Heart right ventricle (tissue), 16 donors: ENCODE measurements at regions of chr22 and their contacts with region 1.

Region 1: GRCh38 chr22:31206906-31207678 is 5.0 kb upstream of the LIMK2 start:
- DNase-seq: peak; percentile 21 to 65
- ATAC-seq: peak in 5 of 8 donors; percentile 1 to 33 (median 3)
- H3K4me3 ChIP-seq: no peak overlapping the region
- H3K27ac ChIP-seq: peak overlapping the region in 7 of 10 donors; percentile 2 to 64 (median 22)
- H3K4me1 ChIP-seq: peaks cover 2 to 38% (median 25%) of the 10 kb centered on the region in 9 donors
- H3K27me3 ChIP-seq: no peaks in the 10 kb centered on the region
- CTCF ChIP-seq: no peak

Region 2: DNA sequence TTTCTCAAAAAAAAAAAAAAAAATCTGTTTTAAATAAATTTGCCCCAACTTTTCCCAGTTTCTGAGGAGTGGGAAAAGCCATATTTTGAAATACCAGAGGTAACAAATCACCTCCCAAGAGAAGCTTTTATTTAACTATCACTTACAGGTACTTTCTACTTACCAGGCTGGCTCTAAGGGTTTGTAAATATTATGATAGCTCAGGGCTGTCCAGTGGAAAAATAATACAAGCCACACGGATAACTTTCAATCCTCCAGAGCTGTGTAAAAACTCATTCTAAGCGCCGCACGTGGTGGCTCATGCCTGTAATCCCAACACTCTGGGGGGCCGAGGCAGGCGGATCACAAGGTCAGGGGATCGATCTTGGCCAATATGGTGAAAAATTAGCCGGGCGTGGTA is 696.0 kb before region 1 on chr22:
- intact Hi-C with region 1: no loop called
- DNase-seq: no peak
- ATAC-seq: no peak
- H3K4me3 ChIP-seq: no peak overlapping the region
- H3K27ac ChIP-seq: no peak overlapping the region
- H3K4me1 ChIP-seq: no peaks in the 10 kb centered on the region
- H3K27me3 ChIP-seq: peaks cover 0 to 33% (median 29%) of the 10 kb centered on the region in 7 donors
- CTCF ChIP-seq: no peak

Region 3: DNA sequence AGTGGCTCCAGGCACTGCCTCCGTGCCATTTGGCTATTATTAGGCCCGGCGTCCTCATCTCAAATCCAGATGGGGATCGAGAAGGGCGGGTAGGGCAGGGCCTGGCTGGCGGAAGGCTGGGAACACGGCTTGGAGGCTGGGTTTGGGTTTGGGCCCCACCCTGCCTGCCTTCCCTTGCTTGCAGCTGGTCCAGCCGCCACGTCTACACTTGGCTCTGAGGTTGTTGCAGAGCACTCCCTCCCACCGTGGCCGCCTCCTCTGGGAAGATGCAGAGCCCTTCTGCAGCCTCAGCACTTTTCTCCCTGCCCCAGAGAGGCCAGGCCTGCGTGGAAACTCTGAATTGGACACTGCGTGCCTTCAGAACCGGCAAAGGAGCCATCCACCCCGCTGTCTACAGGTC is 131.1 kb before region 1 on chr22:
- intact Hi-C with region 1: no loop called
- DNase-seq: peak; percentile 91 to 93
- ATAC-seq: peak; percentile 83 to 94 (median 92)
- H3K4me3 ChIP-seq: peak overlapping the region in 1 of 10 donors; percentile 14
- H3K27ac ChIP-seq: peak overlapping the region; percentile 24 to 92 (median 81)
- H3K4me1 ChIP-seq: peaks cover 10 to 44% (median 18%) of the 10 kb centered on the region in 9 donors
- H3K27me3 ChIP-seq: no peaks in the 10 kb centered on the region
- CTCF ChIP-seq: no peak

Region 4: DNA sequence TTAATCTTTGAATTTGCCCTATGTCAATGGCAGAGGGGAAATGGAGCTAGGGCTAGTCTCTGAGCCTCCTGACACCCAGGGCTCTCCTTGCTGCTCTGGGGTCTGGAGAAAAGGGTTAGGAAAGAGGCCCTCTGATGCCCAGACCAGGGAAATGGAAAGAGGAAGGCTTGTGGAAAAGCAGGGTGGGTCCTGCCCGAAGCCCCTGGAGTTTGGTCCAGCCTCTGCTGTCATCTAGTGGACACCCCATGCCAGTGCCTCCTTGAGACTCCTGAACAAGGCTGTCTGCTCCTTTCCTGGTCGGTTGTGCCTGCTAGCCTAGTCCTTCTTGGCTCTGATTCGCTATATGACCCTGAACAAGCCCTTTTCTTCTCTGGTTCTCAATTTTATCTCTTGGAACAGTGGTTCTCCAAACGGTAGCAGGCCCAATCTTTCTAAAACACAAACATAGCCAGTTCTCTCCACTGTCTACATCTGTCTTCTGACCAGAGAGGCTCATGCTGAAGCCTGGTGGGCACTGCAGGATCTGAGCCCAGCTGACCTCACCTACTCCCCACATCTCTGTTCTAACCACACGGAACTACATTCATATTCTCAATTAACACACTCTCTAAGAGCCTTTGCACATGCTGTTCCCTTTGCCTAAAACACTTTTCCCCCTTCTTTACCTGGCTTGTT is 58.0 kb before region 1 on chr22:
- intact Hi-C with region 1: no loop called
- DNase-seq: peak; percentile 72 to 84
- ATAC-seq: peak; percentile 92 to 99 (median 96)
- H3K4me3 ChIP-seq: no peak overlapping the region
- H3K27ac ChIP-seq: peak overlapping the region; percentile 2 to 82 (median 77)
- H3K4me1 ChIP-seq: peaks cover 0 to 20% (median 12%) of the 10 kb centered on the region in 9 donors
- H3K27me3 ChIP-seq: no peaks in the 10 kb centered on the region
- CTCF ChIP-seq: peak in 8 of 9 donors; percentile 83 to 97 (median 92)

Region 5: GRCh38 chr22:31160328-31160978 is 46.6 kb before region 1 on chr22:
- intact Hi-C with region 1: loop called in 3 of 10 experiments (anchors 5 kb)
- DNase-seq: no peak
- ATAC-seq: peak; percentile 27 to 71 (median 58)
- H3K4me3 ChIP-seq: peak overlapping the region; percentile 59 to 95 (median 82)
- H3K27ac ChIP-seq: peak overlapping the region; percentile 47 to 95 (median 88)
- H3K4me1 ChIP-seq: peaks cover 2 to 43% (median 35%) of the 10 kb centered on the region in 9 donors
- H3K27me3 ChIP-seq: no peaks in the 10 kb centered on the region
- CTCF ChIP-seq: peak in 1 of 9 donors; percentile 2

Region 6: GRCh38 chr22:31321421-31321820 is 114.3 kb after region 1 on chr22:
- intact Hi-C with region 1: no loop called
- DNase-seq: no peak
- ATAC-seq: no peak
- H3K4me3 ChIP-seq: no peak overlapping the region
- H3K27ac ChIP-seq: no peak overlapping the region
- H3K4me1 ChIP-seq: no peaks in the 10 kb centered on the region
- H3K27me3 ChIP-seq: no peaks in the 10 kb centered on the region
- CTCF ChIP-seq: no peak